Endothelial cell of umbilical vein (primary cell): ENCODE measurements at regions of chr6 and their contacts with region 1.

Region 1: DNA sequence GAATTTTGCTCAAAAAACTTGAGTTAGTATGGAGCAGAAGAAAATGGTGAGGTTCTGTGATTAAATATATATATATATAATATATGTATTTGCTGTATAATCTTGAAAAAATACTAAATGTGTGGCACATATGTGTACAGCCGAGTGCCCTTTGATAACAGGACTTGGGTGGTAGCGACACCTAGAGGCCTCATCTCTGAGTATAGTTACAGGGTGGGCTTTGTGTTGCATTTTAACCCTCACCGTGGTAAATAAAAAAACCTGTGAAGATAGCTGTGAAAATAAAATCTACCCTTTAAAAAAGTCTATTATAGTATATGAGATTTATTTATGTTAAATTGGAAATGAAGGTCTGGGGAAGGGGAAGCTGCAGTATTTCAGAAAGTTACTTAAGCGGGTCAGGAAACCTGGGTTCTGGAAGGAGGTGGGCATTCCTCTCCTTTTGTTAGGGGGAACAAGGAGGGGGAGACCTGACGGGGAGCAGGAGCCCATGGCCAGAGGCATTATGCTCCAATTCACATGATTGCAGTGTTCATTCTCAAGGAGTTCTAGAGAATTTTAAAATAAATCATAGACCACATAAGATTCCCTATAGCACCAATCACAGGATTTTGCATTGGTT is 82.7 kb downstream of the SH3BGRL2 start:
- DNase-seq: peak; percentile 64
- H3K4me3 ChIP-seq: no peak overlapping the region
- H3K27ac ChIP-seq: no peak overlapping the region
- H3K4me1 ChIP-seq: no peaks in the 10 kb centered on the region
- H3K27me3 ChIP-seq: no peaks in the 10 kb centered on the region
- CTCF ChIP-seq: peak; percentile 51 to 62
- POLR2A ChIP-seq: no peak

Region 2: GRCh38 chr6:79630883-79631692 is 82.7 kb before region 1 on chr6 and contains the start of gene SH3BGRL2:
- CTCF ChIA-PET with region 1: interaction called, 3 read pairs
- POLR2A ChIA-PET with region 1: no interaction called
- dilution Hi-C with region 1: no loop called
- intact Hi-C with region 1: loop called (anchors 2 kb)
- DNase-seq: peak; percentile 81
- H3K4me3 ChIP-seq: peak within 1 kb of the TSS; percentile 86 to 92 (median 89)
- H3K27ac ChIP-seq: peak within 1 kb of the TSS; percentile 46
- H3K4me1 ChIP-seq: peaks cover 39% of the 10 kb centered on the region
- H3K27me3 ChIP-seq: no peaks in the 10 kb centered on the region
- CTCF ChIP-seq: no peak
- POLR2A ChIP-seq: peak; percentile 49
- total RNA-seq, gene SH3BGRL2: 10.7 and 15.2 TPM in 2 replicates

Region 3: GRCh38 chr6:79813854-79814709 is 100.3 kb after region 1 on chr6:
- CTCF ChIA-PET with region 1: no interaction called
- POLR2A ChIA-PET with region 1: no interaction called
- dilution Hi-C with region 1: no loop called
- intact Hi-C with region 1: loop called (anchors 5 kb)
- DNase-seq: peak; percentile 73
- H3K4me3 ChIP-seq: no peak overlapping the region
- H3K27ac ChIP-seq: no peak overlapping the region
- H3K4me1 ChIP-seq: no peaks in the 10 kb centered on the region
- H3K27me3 ChIP-seq: peaks cover 6 to 9% of the 10 kb centered on the region in 2 experiments
- CTCF ChIP-seq: peak; percentile 81
- POLR2A ChIP-seq: no peak